Activated T-helper 2 cell treated with anti-CD3 and anti-CD28 coated beads, Interferon-gamma antibody, Interleukin-2, Interleukin-4, amounts not matched to agents 10 μg/mL and 5 μg/mL and 100 μg/mL, durations not matched to agents 14 hours and 24 hours and 36 hours (primary cell): ENCODE measurements at regions of chrX and their contacts with region 1.

Region 1: DNA sequence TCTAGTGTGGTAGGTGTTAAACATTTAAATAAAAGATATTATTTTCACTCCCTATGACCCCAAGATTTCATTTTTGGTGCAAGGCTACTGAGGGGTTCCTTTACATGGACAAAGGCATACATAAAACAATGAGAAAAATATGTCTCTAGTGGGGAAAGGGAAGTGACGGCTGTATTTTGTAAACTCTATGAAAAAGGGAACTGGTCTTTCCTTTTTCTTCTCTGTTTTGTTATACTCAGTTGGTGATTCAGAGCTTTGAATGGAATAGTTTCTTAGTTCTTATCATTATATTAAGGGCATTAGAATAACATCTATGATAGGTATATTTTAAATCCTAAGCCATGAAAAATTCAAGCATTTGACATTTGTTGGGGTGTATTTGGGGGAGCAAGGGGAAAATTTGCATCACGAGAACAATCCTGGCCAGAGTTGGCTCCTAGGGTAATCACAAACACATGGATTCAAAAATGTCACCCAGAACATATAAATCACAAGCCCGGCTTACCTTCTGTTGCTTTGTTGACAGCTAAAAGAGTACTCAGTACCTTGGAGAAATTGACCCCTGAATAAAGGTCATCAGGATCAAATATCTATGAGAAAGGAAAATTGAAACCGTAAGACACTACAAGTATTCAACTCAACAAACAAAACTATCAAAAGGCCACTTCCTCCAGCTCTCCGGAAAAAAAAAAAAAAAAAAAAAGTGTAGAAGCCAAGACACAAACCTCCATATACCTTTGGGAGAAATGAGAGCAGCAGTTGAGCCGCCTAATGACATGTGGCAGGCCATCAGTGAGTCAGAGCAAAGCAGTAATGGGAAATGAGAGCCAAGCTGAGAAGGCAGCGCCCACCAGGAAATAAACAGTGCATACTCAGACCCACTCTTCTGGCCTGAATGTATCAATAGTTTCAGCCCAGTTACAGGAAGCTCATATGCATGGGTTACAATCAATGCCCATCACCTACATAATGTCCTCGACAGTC is 33.4 kb downstream of the ARHGEF6 start:
- DNase-seq: no peak
- H3K4me3 Mint-ChIP-seq: peak overlapping the region; percentile 30
- H3K27ac Mint-ChIP-seq: peak overlapping the region; percentile 77
- H3K4me1 Mint-ChIP-seq: peaks cover 82% of the 10 kb centered on the region
- H3K27me3 Mint-ChIP-seq: no peaks in the 10 kb centered on the region

Region 2: GRCh38 chrX:136555694-136556093 is 191.6 kb before region 1 on chrX:
- intact Hi-C with region 1: no loop called
- DNase-seq: no peak
- H3K4me3 Mint-ChIP-seq: no peak overlapping the region
- H3K27ac Mint-ChIP-seq: no peak overlapping the region
- H3K4me1 Mint-ChIP-seq: no peaks in the 10 kb centered on the region
- H3K27me3 Mint-ChIP-seq: peaks cover 16% of the 10 kb centered on the region

Region 3: DNA sequence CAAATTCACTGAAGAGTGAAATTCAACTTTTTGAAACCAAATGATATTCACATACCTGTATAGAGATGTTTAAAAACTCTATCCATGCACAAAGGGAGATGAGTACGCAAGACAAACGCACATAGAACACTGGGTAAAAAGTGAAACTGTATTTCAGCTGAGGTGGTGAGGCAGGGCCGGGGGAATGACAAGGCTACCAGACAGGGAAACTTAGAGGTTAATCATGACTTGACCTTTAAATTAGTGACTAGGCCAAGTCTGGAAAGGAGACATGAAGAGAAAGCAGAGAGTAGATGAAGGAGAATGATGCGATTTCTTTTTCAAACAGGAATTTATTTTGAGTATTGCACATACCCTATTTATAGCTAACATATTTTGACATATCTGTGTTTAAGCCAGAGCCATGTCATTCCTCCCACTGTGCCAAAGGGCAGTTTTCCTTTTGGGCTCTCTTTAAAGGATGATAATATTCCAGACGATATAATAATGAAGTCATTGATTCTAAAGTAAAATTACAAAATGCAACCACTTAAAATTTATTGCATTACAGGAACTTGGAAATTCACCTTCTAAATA is 16.0 kb before region 1 on chrX:
- intact Hi-C with region 1: loop called (anchors 2 kb)
- DNase-seq: no peak
- H3K4me3 Mint-ChIP-seq: peak overlapping the region; percentile 30
- H3K27ac Mint-ChIP-seq: peak overlapping the region; percentile 77
- H3K4me1 Mint-ChIP-seq: peaks cover 48% of the 10 kb centered on the region
- H3K27me3 Mint-ChIP-seq: no peaks in the 10 kb centered on the region

Region 4: GRCh38 chrX:136767104-136767941 is 20.0 kb after region 1 on chrX:
- intact Hi-C with region 1: loop called (anchors 1 kb)
- DNase-seq: no peak
- H3K4me3 Mint-ChIP-seq: peak overlapping the region; percentile 78
- H3K27ac Mint-ChIP-seq: peak overlapping the region; percentile 93
- H3K4me1 Mint-ChIP-seq: peaks cover 56% of the 10 kb centered on the region
- H3K27me3 Mint-ChIP-seq: no peaks in the 10 kb centered on the region